Posterior cingulate gyrus (tissue), 11 donors: ENCODE measurements at regions of chr15 and their contacts with region 1.

Region 1: DNA sequence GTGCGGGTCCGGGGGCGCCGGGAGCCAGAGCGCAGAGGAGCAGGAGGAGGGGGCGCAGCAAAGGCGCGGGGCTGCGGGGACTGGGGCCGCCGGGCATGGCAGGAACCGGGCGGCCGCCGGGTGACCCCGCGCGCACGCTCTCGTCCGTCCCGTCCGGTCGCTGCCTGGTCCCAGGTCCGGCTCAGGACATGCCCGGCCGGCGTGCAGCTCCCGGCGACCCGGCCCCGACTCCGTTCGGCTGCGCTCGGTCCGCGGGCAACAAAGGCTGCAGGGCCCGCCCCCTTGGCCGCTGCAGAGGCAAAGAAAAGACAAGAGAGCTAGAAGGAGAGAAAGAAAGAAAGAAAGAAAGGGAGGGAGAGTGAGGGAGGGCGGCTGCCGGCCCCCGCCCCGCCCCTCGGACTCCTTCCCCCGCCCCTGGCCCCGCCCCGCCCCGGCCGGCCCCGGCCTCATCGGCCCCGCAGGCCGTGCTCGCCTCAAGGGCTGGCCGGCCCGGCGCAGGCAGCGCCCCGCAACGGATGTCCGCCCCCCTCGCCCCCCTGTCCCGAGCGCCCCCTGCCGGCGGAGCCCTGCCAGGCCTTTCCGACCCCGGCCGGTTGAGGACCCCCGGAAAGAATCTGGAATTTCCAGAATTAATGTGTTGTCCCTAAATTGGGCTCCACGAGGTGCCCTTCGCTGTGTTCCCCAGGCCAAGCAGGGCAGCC is at the start of gene ADAMTS7:
- DNase-seq: peak in 6 of 10 donors; percentile 22 to 90 (median 52)

Region 2: GRCh38 chr15:78850941-78851755 is 39.9 kb after region 1 on chr15:
- intact Hi-C with region 1: loop called (anchors 5 kb)
- DNase-seq: peak in 5 of 10 donors; percentile 14 to 85 (median 56)